PC-3 (cell line): ENCODE measurements at regions of chr6 and their contacts with region 1.

Region 1: GRCh38 chr6:33579828-33580714 is at the start of gene BAK1:
- DNase-seq: peak; percentile 92
- ATAC-seq: peak; percentile 93
- H3K4me3 ChIP-seq: peak within 1 kb of the TSS; percentile 100
- H3K27ac ChIP-seq: peak within 1 kb of the TSS; percentile 39; the same call in 1 of the 2 replicates
- H3K4me1 ChIP-seq: peaks cover 24% of the 10 kb centered on the region
- H3K27me3 ChIP-seq: no peaks in the 10 kb centered on the region
- CTCF ChIP-seq: peak; percentile 54
- total RNA-seq, gene BAK1: 15.1 and 23.7 TPM in 2 replicates

Region 2: GRCh38 chr6:33490209-33490608 is 89.9 kb before region 1 on chr6:
- CTCF ChIA-PET with region 1: interaction called, 3 read pairs
- POLR2A ChIA-PET with region 1: no interaction called
- intact Hi-C with region 1: loop called (anchors 10 kb)
- DNase-seq: peak; percentile 47
- ATAC-seq: peak; percentile 90
- H3K4me3 ChIP-seq: no peak overlapping the region
- H3K27ac ChIP-seq: no peak overlapping the region
- H3K4me1 ChIP-seq: no peaks in the 10 kb centered on the region
- H3K27me3 ChIP-seq: no peaks in the 10 kb centered on the region
- CTCF ChIP-seq: peak; percentile 24; the same call in 1 of the 2 replicates

Region 3: GRCh38 chr6:33700391-33701050 is 120.5 kb after region 1 on chr6:
- CTCF ChIA-PET with region 1: no interaction called
- POLR2A ChIA-PET with region 1: interaction called, 26 read pairs
- intact Hi-C with region 1: loop called (anchors 1 kb)
- DNase-seq: peak; percentile 78
- ATAC-seq: peak; percentile 61
- H3K4me3 ChIP-seq: no peak overlapping the region
- H3K27ac ChIP-seq: no peak overlapping the region
- H3K4me1 ChIP-seq: peaks cover 23% of the 10 kb centered on the region
- H3K27me3 ChIP-seq: no peaks in the 10 kb centered on the region
- CTCF ChIP-seq: peak; percentile 91